Activated CD4-positive, alpha-beta T cell treated with anti-CD3 and anti-CD28 coated beads for 36 hours (primary cell): ENCODE measurements at regions of chr2 and their contacts with region 1.

Region 1: DNA sequence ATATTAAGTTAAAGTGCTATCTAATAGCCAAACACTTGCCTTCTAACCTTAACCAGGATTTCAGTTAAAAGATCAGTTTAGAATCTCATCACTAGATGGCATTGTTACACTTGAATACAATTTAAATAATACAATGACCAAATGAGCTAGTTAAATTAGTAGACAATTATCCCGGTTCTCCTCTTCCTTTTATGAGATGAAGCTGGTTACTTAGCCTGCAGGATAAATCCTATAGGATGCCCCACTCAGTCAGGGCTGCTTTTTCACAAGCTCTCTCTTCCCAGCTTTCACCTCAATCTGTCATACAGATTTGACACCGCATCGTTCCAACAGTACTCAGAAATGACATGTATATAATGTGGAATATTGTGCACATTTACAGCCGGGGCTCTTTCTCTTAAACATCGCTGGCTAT is 678.8 kb downstream of the KCNJ3 start:
- DNase-seq: no peak
- ATAC-seq: no peak
- H3K4me3 Mint-ChIP-seq: no peak overlapping the region
- H3K27ac Mint-ChIP-seq: no peak overlapping the region
- H3K4me1 Mint-ChIP-seq: peaks cover 13% of the 10 kb centered on the region
- H3K27me3 Mint-ChIP-seq: peaks cover 2% of the 10 kb centered on the region

Region 2: DNA sequence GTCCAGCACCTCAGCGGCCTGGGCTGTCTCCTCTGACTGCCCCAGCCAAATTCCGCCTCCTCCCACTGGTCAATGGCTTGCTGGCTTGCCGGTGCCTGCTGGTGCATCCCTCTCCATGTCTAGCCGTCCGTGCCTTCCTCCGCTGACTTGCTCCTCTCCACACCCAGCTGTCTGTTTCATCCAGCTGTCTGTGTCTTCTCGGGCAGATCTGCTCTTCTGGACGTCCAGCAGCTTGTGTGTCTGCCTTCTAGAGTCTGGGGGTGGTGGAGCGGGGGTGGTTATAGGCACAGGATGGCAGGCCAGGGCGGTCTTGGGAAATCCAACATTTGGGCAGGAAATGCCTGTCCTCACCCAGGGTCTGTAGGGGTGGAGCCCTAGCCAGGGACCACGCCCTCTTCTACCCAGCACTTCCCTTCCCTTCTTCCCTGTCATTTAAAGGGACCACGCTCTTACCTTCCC is 1136.3 kb before region 1 on chr2:
- CTCF ChIA-PET with region 1: no interaction called
- POLR2A ChIA-PET with region 1: no interaction called
- intact Hi-C with region 1: no loop called
- DNase-seq: no peak
- ATAC-seq: no peak
- H3K4me3 Mint-ChIP-seq: no peak overlapping the region
- H3K27ac Mint-ChIP-seq: no peak overlapping the region
- H3K4me1 Mint-ChIP-seq: no peaks in the 10 kb centered on the region
- H3K27me3 Mint-ChIP-seq: no peaks in the 10 kb centered on the region

Region 3: GRCh38 chr2:155356250-155356649 is 21.0 kb before region 1 on chr2:
- CTCF ChIA-PET with region 1: no interaction called
- POLR2A ChIA-PET with region 1: no interaction called
- intact Hi-C with region 1: loop called in 1 of 2 experiments (anchors 2 kb)
- DNase-seq: no peak
- ATAC-seq: no peak
- H3K4me3 Mint-ChIP-seq: no peak overlapping the region
- H3K27ac Mint-ChIP-seq: no peak overlapping the region
- H3K4me1 Mint-ChIP-seq: no peaks in the 10 kb centered on the region
- H3K27me3 Mint-ChIP-seq: no peaks in the 10 kb centered on the region

Region 4: GRCh38 chr2:156065905-156066304 is 688.6 kb after region 1 on chr2:
- CTCF ChIA-PET with region 1: no interaction called
- POLR2A ChIA-PET with region 1: no interaction called
- intact Hi-C with region 1: loop called in 1 of 2 experiments (anchors 10 kb)
- DNase-seq: peak; percentile 10
- ATAC-seq: no peak
- H3K4me3 Mint-ChIP-seq: no peak overlapping the region
- H3K27ac Mint-ChIP-seq: no peak overlapping the region
- H3K4me1 Mint-ChIP-seq: no peaks in the 10 kb centered on the region
- H3K27me3 Mint-ChIP-seq: peaks cover 2% of the 10 kb centered on the region

Region 5: GRCh38 chr2:156589381-156590079 is 1212.3 kb after region 1 on chr2:
- CTCF ChIA-PET with region 1: interaction called, 3 read pairs
- POLR2A ChIA-PET with region 1: no interaction called
- intact Hi-C with region 1: loop called (anchors 1 to 5 kb)
- DNase-seq: peak; percentile 31
- ATAC-seq: no peak
- H3K4me3 Mint-ChIP-seq: no peak overlapping the region
- H3K27ac Mint-ChIP-seq: no peak overlapping the region
- H3K4me1 Mint-ChIP-seq: peaks cover 4% of the 10 kb centered on the region
- H3K27me3 Mint-ChIP-seq: no peaks in the 10 kb centered on the region

Region 6: GRCh38 chr2:157052685-157053224 is 1675.5 kb after region 1 on chr2:
- CTCF ChIA-PET with region 1: no interaction called
- POLR2A ChIA-PET with region 1: no interaction called
- intact Hi-C with region 1: loop called in 1 of 2 experiments (anchors 5 kb)
- DNase-seq: no peak
- ATAC-seq: no peak
- H3K4me3 Mint-ChIP-seq: no peak overlapping the region
- H3K27ac Mint-ChIP-seq: no peak overlapping the region
- H3K4me1 Mint-ChIP-seq: no peaks in the 10 kb centered on the region
- H3K27me3 Mint-ChIP-seq: peaks cover 4% of the 10 kb centered on the region